ENCODE measurements at regions of chr12 and their contacts with region 1.

Region 1: GRCh38 chr12:131928711-131929580 is at the start of gene PUS1:
- DNase-seq: peak; percentile 84 to 95 (median 93)
- ATAC-seq: peak; percentile 95
- H3K4me3 ChIP-seq: peak within 1 kb of the TSS; percentile 75
- H3K4me3 Mint-ChIP-seq: peak within 1 kb of the TSS; percentile 87 to 100 (median 92)
- H3K27ac ChIP-seq: peak within 1 kb of the TSS; percentile 89
- H3K27ac Mint-ChIP-seq: peak within 1 kb of the TSS; percentile 79 to 97 (median 88)
- H3K4me1 ChIP-seq: no peaks in the 10 kb centered on the region
- H3K4me1 Mint-ChIP-seq: peaks cover 13 to 28% (median 25%) of the 10 kb centered on the region in 7 donors
- H3K27me3 ChIP-seq: no peaks in the 10 kb centered on the region
- H3K27me3 Mint-ChIP-seq: no peaks in the 10 kb centered on the region
- total RNA-seq, gene PUS1: 23.4 to 54.9 (median 49.2) TPM

Region 2: GRCh38 chr12:131959641-131960589 is 31.0 kb after region 1 on chr12:
- CTCF ChIA-PET with region 1: no interaction called
- POLR2A ChIA-PET with region 1: interaction called, 3 read pairs
- intact Hi-C with region 1: loop called in 1 of 2 experiments (anchors 5 kb)
- DNase-seq: no peak
- ATAC-seq: no peak
- H3K4me3 ChIP-seq: no peak overlapping the region
- H3K4me3 Mint-ChIP-seq: peak overlapping the region in 2 of 10 donors; percentile 11 to 19
- H3K27ac ChIP-seq: peak overlapping the region; percentile 7
- H3K27ac Mint-ChIP-seq: peak overlapping the region in 8 of 9 donors; percentile 40 to 87 (median 68)
- H3K4me1 ChIP-seq: peaks cover 11 to 33% of the 10 kb centered on the region in 2 donors
- H3K4me1 Mint-ChIP-seq: peaks cover 52 to 80% (median 67%) of the 10 kb centered on the region in 7 donors
- H3K27me3 ChIP-seq: no peaks in the 10 kb centered on the region
- H3K27me3 Mint-ChIP-seq: no peaks in the 10 kb centered on the region

Region 3: GRCh38 chr12:132940071-132940719 is 1011.2 kb after region 1 on chr12:
- CTCF ChIA-PET with region 1: no interaction called
- POLR2A ChIA-PET with region 1: no interaction called
- intact Hi-C with region 1: no loop called
- DNase-seq: no peak
- ATAC-seq: no peak
- H3K4me3 ChIP-seq: no peak overlapping the region
- H3K4me3 Mint-ChIP-seq: no peak overlapping the region
- H3K27ac ChIP-seq: no peak overlapping the region
- H3K27ac Mint-ChIP-seq: no peak overlapping the region
- H3K4me1 ChIP-seq: no peaks in the 10 kb centered on the region
- H3K4me1 Mint-ChIP-seq: no peaks in the 10 kb centered on the region
- H3K27me3 ChIP-seq: no peaks in the 10 kb centered on the region
- H3K27me3 Mint-ChIP-seq: no peaks in the 10 kb centered on the region